ENCODE measurements at regions of chr5 and their contacts with region 1.

Region 1: GRCh38 chr5:135551593-135552447 is 16.1 kb upstream of the NEUROG1 start:
- DNase-seq: peak; percentile 38
- H3K4me3 ChIP-seq: no peak overlapping the region
- H3K27ac ChIP-seq: no peak overlapping the region
- H3K27me3 ChIP-seq: peaks cover 56% of the 10 kb centered on the region
- CTCF ChIP-seq: peak; percentile 88

Region 2: GRCh38 chr5:135488727-135489465 is 62.9 kb before region 1 on chr5:
- CTCF ChIA-PET with region 1: interaction called, 22 read pairs
- POLR2A ChIA-PET with region 1: no interaction called
- DNase-seq: peak; percentile 45
- H3K4me3 ChIP-seq: peak overlapping the region; percentile 61
- H3K27ac ChIP-seq: peak overlapping the region; percentile 11
- H3K27me3 ChIP-seq: peaks cover 18% of the 10 kb centered on the region
- CTCF ChIP-seq: no peak

Region 3: DNA sequence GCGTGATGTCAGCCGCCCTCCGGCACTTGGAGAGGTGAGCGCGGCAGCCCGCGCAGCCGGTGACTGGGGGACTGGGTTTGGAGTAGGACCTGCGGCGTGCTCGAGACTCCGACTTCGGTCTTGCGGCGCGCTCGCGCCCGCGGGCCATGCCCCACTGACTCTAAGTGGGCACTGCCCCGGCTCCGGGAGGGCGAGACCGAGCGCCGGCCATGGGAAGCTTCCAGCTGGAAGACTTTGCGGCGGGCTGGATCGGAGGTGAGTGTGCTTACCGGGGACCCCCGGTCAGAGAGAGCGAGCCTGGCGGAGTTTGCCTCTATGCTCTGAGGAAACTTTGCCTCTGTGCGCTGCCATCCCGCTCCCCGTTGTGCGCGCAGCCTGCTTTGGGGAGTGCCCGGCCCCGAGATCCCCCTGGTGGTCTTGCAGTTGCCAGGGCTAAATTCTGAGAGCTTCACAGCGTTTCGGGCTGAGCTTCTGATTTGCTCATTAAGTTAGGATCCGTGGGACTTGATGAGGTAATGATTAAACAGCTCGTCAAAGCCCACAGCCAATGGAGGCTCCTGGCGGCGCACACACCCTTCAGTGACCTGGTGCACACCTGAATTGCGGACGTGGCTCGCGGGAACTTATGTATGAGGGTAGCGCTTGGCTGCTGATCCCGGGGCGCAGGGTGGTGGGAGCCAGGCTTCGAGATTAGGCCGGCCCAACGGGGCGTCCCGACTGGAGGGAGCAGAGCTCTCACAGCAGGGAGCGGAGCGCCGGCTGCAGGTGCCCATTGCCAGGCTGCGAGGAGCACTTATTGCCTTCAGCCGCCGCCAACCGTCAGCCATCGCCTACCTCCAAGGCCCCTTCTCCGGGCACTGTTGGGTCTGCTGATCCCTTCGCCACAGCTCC is 283.1 kb after region 1 on chr5 and contains the start of gene SLC25A48:
- CTCF ChIA-PET with region 1: interaction called, 12 read pairs
- POLR2A ChIA-PET with region 1: no interaction called
- DNase-seq: no peak
- H3K4me3 ChIP-seq: peak within 1 kb of the TSS; percentile 22
- H3K27ac ChIP-seq: no peak within 1 kb of the TSS
- H3K27me3 ChIP-seq: peaks cover 24% of the 10 kb centered on the region
- CTCF ChIP-seq: no peak; the same call in 1 of the 2 replicates
- polyA plus RNA-seq, gene SLC25A48: not detected in 2 replicates